PC-9 (cell line): ENCODE measurements at regions of chr20 and their contacts with region 1.

Region 1: DNA sequence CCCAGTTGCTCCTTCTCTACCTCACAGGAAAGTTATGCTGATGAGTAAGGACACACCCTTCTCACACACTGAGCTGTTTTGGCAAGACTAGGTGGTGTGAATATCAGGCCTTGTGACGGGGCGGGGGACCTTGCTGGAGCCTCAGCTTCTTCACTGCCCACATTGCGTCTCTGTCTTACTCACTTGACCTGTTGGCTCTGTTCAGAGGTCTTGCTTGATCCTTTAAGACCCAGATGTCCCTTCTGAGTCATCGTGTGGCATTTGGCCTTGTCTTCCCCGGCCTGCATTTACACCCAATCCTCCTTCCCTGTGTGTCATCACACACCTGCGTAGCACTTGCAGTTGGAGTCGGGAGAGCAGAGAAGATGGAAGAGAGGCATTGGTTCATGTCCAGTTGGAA is 8.3 kb upstream of the PRND start:
- DNase-seq: peak; percentile 91 to 100
- H3K4me3 ChIP-seq: no peak overlapping the region
- H3K27ac ChIP-seq: peak overlapping the region; percentile 78
- H3K4me1 ChIP-seq: peaks cover 22% of the 10 kb centered on the region
- H3K27me3 ChIP-seq: no peaks in the 10 kb centered on the region
- CTCF ChIP-seq: no peak

Region 2: DNA sequence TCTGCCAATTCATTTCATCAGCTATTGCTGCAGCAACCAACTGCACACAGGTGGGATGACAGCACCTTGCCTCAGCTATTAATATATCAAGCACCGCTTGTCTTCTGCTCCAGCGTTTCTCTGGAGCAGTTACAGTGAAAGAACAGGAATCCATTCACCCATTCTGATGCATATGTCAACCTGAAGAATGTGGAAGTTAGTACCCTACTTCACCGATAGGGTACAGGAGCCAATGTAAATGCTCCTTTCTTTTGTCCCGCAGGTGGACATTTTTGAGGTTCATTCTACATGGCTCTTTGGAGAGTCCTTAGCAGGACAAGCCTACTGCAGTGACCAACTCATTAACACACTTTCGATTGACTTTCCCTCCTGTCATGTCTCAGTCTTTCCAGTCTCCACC is 131.6 kb before region 1 on chr20:
- CTCF ChIA-PET with region 1: no interaction called
- POLR2A ChIA-PET with region 1: no interaction called
- intact Hi-C with region 1: no loop called
- DNase-seq: no peak
- H3K4me3 ChIP-seq: no peak overlapping the region
- H3K27ac ChIP-seq: no peak overlapping the region
- H3K4me1 ChIP-seq: peaks cover 11% of the 10 kb centered on the region; the same call in 1 of the 2 replicates
- H3K27me3 ChIP-seq: no peaks in the 10 kb centered on the region
- CTCF ChIP-seq: no peak

Region 3: DNA sequence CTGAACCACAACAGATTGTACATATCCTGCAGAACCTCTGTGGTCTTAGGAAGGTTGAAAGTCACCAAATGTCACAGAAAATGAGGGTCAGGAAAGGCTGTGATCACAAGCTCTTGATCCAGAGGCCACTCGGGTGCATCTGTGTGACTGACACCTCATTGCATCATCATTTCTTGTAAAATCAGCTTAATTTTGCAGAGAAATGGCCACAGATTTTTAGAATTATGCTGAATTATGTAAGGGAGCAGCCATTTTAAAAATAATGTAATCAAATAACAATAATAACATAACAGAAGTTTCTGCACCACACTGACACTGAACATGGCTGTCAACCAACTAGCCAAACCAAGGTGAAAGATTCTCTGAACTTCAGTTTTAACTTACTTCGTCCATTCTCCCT is 24.2 kb before region 1 on chr20:
- CTCF ChIA-PET with region 1: interaction called, 17 read pairs
- POLR2A ChIA-PET with region 1: no interaction called
- intact Hi-C with region 1: no loop called
- DNase-seq: no peak
- H3K4me3 ChIP-seq: peak overlapping the region; percentile 97
- H3K27ac ChIP-seq: no peak overlapping the region
- H3K4me1 ChIP-seq: peaks cover 62% of the 10 kb centered on the region
- H3K27me3 ChIP-seq: no peaks in the 10 kb centered on the region
- CTCF ChIP-seq: no peak